ENCODE measurements at regions of chr3 and their contacts with region 1.

Region 1: GRCh38 chr3:188954590-188955208 is 217.1 kb upstream of the TPRG1 start:
- DNase-seq: peak; percentile 78
- ATAC-seq: peak; percentile 89
- H3K4me3 ChIP-seq: no peak overlapping the region
- H3K27ac ChIP-seq: no peak overlapping the region
- H3K4me1 ChIP-seq: peaks cover 13% of the 10 kb centered on the region
- H3K27me3 ChIP-seq: no peaks in the 10 kb centered on the region
- CTCF ChIP-seq: peak; percentile 93

Region 2: GRCh38 chr3:187738331-187739093 is 1216.2 kb before region 1 on chr3:
- CTCF ChIA-PET with region 1: interaction called, 57 read pairs
- POLR2A ChIA-PET with region 1: no interaction called
- in situ Hi-C with region 1: loop called (anchors 10 kb)
- intact Hi-C with region 1: loop called (anchors 1 kb)
- DNase-seq: peak; percentile 88
- ATAC-seq: peak; percentile 75
- H3K4me3 ChIP-seq: peak overlapping the region; percentile 59 to 94
- H3K27ac ChIP-seq: peak overlapping the region; percentile 79
- H3K4me1 ChIP-seq: peaks cover 45% of the 10 kb centered on the region
- H3K27me3 ChIP-seq: no peaks in the 10 kb centered on the region
- CTCF ChIP-seq: peak; percentile 92

Region 3: GRCh38 chr3:188037216-188037718 is 917.4 kb before region 1 on chr3:
- CTCF ChIA-PET with region 1: no interaction called
- POLR2A ChIA-PET with region 1: no interaction called
- in situ Hi-C with region 1: no loop called
- intact Hi-C with region 1: loop called (anchors 5 kb)
- DNase-seq: no peak
- ATAC-seq: peak; percentile 80
- H3K4me3 ChIP-seq: no peak overlapping the region
- H3K27ac ChIP-seq: no peak overlapping the region
- H3K4me1 ChIP-seq: peaks cover 9% of the 10 kb centered on the region
- H3K27me3 ChIP-seq: no peaks in the 10 kb centered on the region
- CTCF ChIP-seq: peak; percentile 78

Region 4: DNA sequence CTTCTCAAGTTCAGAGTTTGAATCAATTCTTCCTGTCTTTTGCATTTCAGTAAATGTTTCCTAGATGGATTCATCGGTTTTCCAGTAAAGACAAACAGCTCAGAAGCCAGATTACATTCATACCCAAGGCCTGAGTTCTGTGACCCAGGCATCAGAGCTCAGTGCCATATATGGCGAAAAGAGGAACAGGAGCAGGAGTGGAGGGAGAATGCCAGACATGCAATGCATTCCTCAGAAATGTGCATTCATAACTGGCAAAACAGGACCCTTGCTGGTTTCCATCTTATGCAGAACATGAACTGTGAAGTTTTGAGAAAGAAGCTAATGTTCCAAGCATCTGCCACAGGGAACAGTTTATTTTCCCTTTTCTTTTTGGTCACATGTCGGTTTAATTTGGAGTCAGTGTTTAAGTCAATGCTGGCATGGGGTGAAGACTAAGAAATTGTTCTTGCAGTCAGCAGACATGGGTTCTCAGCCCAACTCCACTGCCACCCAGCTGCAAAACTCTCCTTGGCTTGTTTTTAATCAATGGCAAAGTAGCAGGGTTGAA is 684.2 kb before region 1 on chr3:
- CTCF ChIA-PET with region 1: no interaction called
- POLR2A ChIA-PET with region 1: no interaction called
- in situ Hi-C with region 1: no loop called
- intact Hi-C with region 1: loop called (anchors 10 kb)
- DNase-seq: no peak
- ATAC-seq: peak; percentile 74
- H3K4me3 ChIP-seq: peak overlapping the region in 1 of 2 experiments; percentile 10; a peak in 1 of 4 replicates
- H3K27ac ChIP-seq: peak overlapping the region; percentile 88
- H3K4me1 ChIP-seq: peaks cover 85% of the 10 kb centered on the region
- H3K27me3 ChIP-seq: no peaks in the 10 kb centered on the region
- CTCF ChIP-seq: no peak

Region 5: DNA sequence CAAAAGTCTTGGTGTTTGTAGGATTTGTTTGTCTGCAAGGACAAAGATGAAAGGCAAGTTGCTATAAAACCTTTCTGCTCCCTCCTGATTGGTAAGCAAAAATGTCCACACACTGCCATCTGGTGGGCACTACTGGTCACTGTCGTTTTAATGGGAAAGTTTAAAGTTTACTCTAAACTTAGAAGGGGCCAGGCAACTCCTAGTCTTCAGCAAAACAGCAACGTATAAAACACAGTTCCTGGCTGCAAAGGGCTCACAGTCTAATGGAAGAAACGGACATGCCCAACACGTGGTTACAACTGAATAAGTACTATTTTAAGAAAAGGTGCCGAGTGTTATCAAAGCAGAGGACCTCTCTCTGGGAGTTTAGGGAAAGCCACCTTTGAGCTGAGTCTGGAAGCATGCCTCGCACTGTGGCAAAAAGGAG is 193.4 kb after region 1 on chr3:
- CTCF ChIA-PET with region 1: interaction called, 3 read pairs
- POLR2A ChIA-PET with region 1: no interaction called
- in situ Hi-C with region 1: no loop called
- intact Hi-C with region 1: loop called (anchors 5 kb)
- DNase-seq: no peak
- ATAC-seq: peak; percentile 83
- H3K4me3 ChIP-seq: no peak overlapping the region
- H3K27ac ChIP-seq: no peak overlapping the region
- H3K4me1 ChIP-seq: peaks cover 4% of the 10 kb centered on the region; the same call in 1 of the 2 replicates
- H3K27me3 ChIP-seq: peaks cover 10% of the 10 kb centered on the region; the same call in 1 of the 2 replicates
- CTCF ChIP-seq: peak; percentile 88

Region 6: DNA sequence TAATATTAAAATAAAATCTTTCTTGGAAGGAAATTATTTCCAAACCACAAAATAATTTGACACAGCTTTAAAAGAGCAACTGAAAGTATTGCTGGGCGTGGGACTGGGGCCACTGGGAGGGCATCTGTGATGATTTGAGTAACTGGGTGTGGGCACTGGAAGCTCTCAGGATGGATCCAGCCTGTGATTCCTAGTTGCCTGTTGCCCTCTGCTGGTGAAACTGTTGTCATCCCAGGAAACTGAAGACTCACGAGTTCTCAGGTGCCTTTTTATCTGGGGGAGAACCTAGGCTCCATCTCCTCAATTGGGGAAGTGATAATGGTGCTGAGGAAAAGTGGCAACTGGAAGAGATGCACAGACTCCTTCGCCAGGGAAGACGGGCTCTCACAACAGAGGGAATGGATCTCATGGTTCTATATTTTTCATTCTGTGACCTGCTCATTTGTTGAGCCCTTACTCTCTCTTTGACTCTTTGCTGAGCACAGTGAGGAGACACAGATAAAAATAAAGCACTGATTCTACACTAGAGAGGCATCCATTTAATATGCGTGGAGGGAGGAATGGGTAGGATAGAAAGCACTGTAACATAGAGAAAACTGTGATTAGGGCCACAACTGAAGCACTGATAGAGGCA is 278.6 kb after region 1 on chr3:
- CTCF ChIA-PET with region 1: no interaction called
- POLR2A ChIA-PET with region 1: no interaction called
- in situ Hi-C with region 1: no loop called
- intact Hi-C with region 1: loop called (anchors 5 kb)
- DNase-seq: peak; percentile 18
- ATAC-seq: peak; percentile 96
- H3K4me3 ChIP-seq: no peak overlapping the region
- H3K27ac ChIP-seq: no peak overlapping the region
- H3K4me1 ChIP-seq: no peaks in the 10 kb centered on the region
- H3K27me3 ChIP-seq: no peaks in the 10 kb centered on the region; the same call in 1 of the 2 replicates
- CTCF ChIP-seq: peak; percentile 89

Region 7: GRCh38 chr3:189496375-189497138 is 541.9 kb after region 1 on chr3:
- CTCF ChIA-PET with region 1: no interaction called
- POLR2A ChIA-PET with region 1: no interaction called
- in situ Hi-C with region 1: no loop called
- intact Hi-C with region 1: no loop called
- DNase-seq: no peak
- ATAC-seq: no peak
- H3K4me3 ChIP-seq: no peak overlapping the region
- H3K27ac ChIP-seq: no peak overlapping the region
- H3K4me1 ChIP-seq: no peaks in the 10 kb centered on the region
- H3K27me3 ChIP-seq: no peaks in the 10 kb centered on the region
- CTCF ChIP-seq: no peak